ENCODE measurements at regions of chr2 and their contacts with region 1.

Region 1: DNA sequence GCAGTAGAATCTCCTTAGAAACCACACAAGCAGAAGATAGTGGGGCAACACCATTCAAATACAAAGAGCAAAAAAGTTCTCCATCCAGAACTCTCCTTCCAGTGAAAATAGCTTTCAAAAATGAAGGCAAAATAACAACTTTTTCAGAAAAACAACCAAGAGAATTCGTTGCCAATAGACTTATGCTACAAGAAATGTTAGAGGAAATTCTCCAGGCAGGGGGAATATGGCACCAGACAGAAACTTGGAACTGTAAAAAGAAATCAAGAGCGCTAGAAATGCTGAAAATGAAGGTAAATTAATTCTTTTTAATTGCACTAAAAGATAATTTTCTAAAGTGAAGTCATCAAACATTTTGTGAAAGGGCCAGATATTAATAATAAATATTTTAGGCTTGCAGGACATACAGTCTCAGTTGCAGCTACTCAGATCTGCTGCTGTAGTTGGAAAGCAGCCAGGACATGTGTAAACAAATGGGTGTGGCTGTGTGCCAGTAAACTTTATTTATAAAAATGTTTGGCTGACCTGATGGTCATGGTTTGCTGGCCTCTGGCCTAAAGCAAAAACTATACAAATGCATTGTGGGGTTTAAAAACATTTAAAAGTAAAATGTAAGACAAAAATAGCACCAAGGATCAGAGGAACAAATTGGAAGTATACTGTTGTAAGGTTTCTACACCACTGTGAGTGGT is 73.7 kb upstream of the TGFA start:
- DNase-seq: no peak
- H3K4me3 ChIP-seq: no peak overlapping the region
- H3K27ac ChIP-seq: no peak overlapping the region
- H3K4me1 ChIP-seq: no peaks in the 10 kb centered on the region
- H3K27me3 ChIP-seq: peaks cover 14% of the 10 kb centered on the region
- CTCF ChIP-seq: no peak

Region 2: DNA sequence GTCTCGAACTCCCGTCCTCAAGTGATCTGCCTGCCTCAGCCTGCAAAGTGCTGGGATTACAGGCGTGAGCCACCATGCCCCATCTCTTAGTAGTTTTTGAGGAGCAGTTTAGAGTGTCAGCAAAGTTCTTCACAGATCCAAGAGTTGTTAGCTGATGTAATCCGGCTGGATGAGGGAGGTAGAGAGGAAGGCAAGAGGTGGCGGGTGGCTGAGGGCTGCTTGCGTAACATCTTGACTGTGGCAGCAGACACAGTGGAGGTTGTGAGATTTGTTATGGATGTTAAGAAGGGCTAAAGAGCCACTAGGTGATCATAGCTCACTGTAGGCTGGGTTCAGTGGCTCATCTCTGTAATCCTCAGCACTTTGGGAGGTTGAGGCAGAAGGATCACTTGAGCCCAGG is 306.0 kb before region 1 on chr2:
- CTCF ChIA-PET with region 1: no interaction called
- POLR2A ChIA-PET with region 1: no interaction called
- intact Hi-C with region 1: loop called (anchors 5 kb)
- DNase-seq: no peak
- H3K4me3 ChIP-seq: no peak overlapping the region
- H3K27ac ChIP-seq: no peak overlapping the region
- H3K4me1 ChIP-seq: no peaks in the 10 kb centered on the region
- H3K27me3 ChIP-seq: no peaks in the 10 kb centered on the region
- CTCF ChIP-seq: no peak

Measured in A673 (cell line).